ENCODE measurements at regions of chr11 and their contacts with region 1.

Region 1: GRCh38 chr11:1763796-1764661 is at the start of gene CTSD:
- DNase-seq: peak; percentile 16 to 93
- H3K4me3 ChIP-seq: peak within 1 kb of the TSS; percentile 74 to 96
- H3K27ac ChIP-seq: peak within 1 kb of the TSS; percentile 83 to 94
- H3K4me1 ChIP-seq: peaks cover 24 to 43% of the 10 kb centered on the region in 2 donors
- H3K27me3 ChIP-seq: no peaks in the 10 kb centered on the region
- CTCF ChIP-seq: no peak
- total RNA-seq, gene CTSD: 777 TPM

Region 2: GRCh38 chr11:842370-843002 is 921.5 kb before region 1 on chr11 and contains the starts of genes POLR2L and TSPAN4:
- intact Hi-C with region 1: loop called (anchors 10 kb)
- DNase-seq: peak in 1 of 2 donors; percentile 93
- H3K4me3 ChIP-seq: peak within 1 kb of the TSS; percentile 94 to 98
- H3K27ac ChIP-seq: peak within 1 kb of the TSS; percentile 92 to 95
- H3K4me1 ChIP-seq: peaks cover 36 to 41% of the 10 kb centered on the region in 2 donors
- H3K27me3 ChIP-seq: no peaks in the 10 kb centered on the region
- CTCF ChIP-seq: no peak
- total RNA-seq, gene POLR2L: 141 TPM
- total RNA-seq, gene TSPAN4: 252 TPM

Region 3: DNA sequence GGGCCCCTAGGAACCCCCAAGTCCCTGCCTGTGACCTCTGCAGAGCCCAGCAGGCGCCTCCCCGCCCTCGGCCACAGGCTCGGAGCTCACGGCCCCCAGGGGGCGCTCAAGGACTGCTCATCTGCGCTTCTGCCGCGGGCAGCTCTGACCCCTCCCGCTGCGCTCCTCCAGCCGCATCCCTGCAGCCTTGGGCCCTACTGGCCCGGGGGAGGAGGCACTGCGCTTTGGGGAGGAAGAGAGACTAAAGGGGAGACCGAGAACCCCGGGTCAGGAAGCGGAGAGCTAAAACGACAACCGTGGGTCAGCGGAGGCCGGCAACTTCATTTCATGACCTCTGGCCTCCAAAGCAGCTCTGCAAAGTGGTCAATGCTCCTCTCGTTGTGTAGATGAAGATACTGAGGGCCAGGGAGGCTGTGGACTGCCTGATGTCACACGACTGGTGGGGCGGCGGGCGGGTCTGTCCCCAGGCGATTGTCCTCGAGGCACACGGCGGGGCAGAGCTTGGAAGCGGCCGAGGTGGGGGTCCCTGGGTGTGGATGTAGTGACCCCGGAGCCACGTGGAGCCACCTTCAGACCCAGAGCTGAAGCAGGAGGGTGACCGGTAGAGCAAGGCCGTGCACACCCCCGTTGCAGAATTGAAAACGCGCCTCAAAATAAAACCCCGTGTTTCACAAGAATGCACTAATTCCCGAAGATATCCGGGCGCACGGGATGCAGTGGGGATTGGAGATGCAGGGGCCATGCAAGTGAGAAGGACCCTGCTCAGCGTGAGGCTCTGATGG is 69.8 kb before region 1 on chr11:
- intact Hi-C with region 1: loop called (anchors 5 kb)
- DNase-seq: peak in 1 of 2 donors; percentile 90
- H3K4me3 ChIP-seq: peak overlapping the region; percentile 35 to 41
- H3K27ac ChIP-seq: peak overlapping the region in 1 of 2 donors; percentile 72
- H3K4me1 ChIP-seq: peaks cover 4 to 8% of the 10 kb centered on the region in 2 donors
- H3K27me3 ChIP-seq: no peaks in the 10 kb centered on the region
- CTCF ChIP-seq: peak; percentile 86 to 95 (median 95)

Region 4: GRCh38 chr11:1827095-1827813 is 63.2 kb after region 1 on chr11:
- intact Hi-C with region 1: loop called (anchors 1 kb)
- DNase-seq: peak; percentile 51 to 93
- H3K4me3 ChIP-seq: peak overlapping the region in 1 of 2 donors; percentile 38
- H3K27ac ChIP-seq: peak overlapping the region; percentile 94 to 96
- H3K4me1 ChIP-seq: peaks cover 60 to 76% of the 10 kb centered on the region in 2 donors
- H3K27me3 ChIP-seq: no peaks in the 10 kb centered on the region
- CTCF ChIP-seq: peak in 1 of 3 experiments; percentile 13

Region 5: DNA sequence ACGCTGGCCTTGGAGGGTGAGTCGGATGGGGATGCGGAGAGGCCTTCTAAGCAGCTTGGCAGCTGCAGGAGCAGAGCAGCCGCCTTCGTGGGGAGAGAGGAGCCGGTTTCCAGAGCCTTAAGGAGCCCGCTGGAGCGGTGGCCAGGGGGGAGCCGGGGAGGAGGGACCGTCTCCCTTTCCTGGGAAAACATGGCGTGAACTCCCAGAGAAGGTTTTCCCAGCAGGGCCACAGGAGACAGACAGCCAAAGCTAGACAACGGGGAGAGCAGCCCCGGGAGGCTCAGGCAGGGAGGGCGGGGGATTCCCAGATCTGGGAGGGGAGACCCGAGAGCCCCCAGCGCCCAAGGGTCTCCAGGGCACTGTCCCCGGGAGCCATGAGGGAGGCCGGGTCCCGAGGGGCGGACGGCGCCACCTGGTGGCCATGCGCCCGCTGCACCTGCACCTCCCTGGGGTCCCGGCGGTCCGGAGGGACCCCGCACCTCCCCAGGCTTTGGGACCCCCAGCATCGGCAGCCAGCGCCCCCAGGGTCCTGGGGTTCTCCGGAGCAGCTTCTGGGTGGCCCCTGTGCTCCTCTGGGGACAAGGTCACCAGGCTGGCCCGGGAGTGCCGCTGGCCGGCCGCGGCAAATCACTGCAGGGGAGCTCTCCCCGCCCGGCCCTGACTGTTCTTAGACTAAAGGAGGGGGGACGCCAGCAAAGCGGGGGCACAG is 68.3 kb after region 1 on chr11:
- intact Hi-C with region 1: loop called (anchors 1 kb)
- DNase-seq: peak in 1 of 2 donors; percentile 74
- H3K4me3 ChIP-seq: peak overlapping the region; percentile 37 to 53
- H3K27ac ChIP-seq: peak overlapping the region; percentile 94 to 96
- H3K4me1 ChIP-seq: peaks cover 44% of the 10 kb centered on the region in 2 donors
- H3K27me3 ChIP-seq: no peaks in the 10 kb centered on the region
- CTCF ChIP-seq: peak; percentile 98 to 100 (median 98)

Region 6: GRCh38 chr11:2377511-2378443 is 613.7 kb after region 1 on chr11:
- intact Hi-C with region 1: loop called (anchors 10 kb)
- DNase-seq: peak in 1 of 2 donors; percentile 87
- H3K4me3 ChIP-seq: peak overlapping the region; percentile 79 to 98
- H3K27ac ChIP-seq: peak overlapping the region; percentile 97 to 99
- H3K4me1 ChIP-seq: peaks cover 14 to 37% of the 10 kb centered on the region in 2 donors
- H3K27me3 ChIP-seq: no peaks in the 10 kb centered on the region
- CTCF ChIP-seq: no peak

Measured in ascending aorta (tissue), 2 donors.